ENCODE measurements at regions of chr10 and their contacts with region 1.

Region 1: DNA sequence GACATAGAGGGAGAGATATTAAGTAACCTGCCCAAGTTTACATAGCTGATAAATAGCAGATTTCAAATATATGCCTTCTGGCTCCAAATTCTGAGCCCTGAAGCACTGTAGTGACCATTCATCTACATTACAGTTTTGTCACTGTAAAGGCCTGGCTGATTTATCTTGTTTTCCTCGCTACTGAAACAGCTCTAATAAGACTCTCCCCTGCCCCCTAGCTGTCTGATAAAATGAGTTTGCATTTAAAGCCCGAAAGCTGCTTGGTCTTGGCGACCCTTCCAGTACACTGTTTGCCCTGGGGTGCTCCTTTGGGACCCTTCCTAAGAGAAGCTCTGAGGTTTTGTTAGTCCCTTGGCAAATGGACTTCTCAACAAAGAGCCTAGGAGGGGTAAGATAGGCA is 59.7 kb upstream of the RAB11FIP2 start:
- DNase-seq: peak in 2 of 4 donors; percentile 23 to 48
- ATAC-seq: no peak
- H3K4me3 ChIP-seq: no peak overlapping the region
- H3K27ac ChIP-seq: no peak overlapping the region
- H3K4me1 ChIP-seq: no peaks in the 10 kb centered on the region
- H3K27me3 ChIP-seq: no peaks in the 10 kb centered on the region
- CTCF ChIP-seq: peak; percentile 10 to 57 (median 45)
- POLR2A ChIP-seq: no peak

Region 2: DNA sequence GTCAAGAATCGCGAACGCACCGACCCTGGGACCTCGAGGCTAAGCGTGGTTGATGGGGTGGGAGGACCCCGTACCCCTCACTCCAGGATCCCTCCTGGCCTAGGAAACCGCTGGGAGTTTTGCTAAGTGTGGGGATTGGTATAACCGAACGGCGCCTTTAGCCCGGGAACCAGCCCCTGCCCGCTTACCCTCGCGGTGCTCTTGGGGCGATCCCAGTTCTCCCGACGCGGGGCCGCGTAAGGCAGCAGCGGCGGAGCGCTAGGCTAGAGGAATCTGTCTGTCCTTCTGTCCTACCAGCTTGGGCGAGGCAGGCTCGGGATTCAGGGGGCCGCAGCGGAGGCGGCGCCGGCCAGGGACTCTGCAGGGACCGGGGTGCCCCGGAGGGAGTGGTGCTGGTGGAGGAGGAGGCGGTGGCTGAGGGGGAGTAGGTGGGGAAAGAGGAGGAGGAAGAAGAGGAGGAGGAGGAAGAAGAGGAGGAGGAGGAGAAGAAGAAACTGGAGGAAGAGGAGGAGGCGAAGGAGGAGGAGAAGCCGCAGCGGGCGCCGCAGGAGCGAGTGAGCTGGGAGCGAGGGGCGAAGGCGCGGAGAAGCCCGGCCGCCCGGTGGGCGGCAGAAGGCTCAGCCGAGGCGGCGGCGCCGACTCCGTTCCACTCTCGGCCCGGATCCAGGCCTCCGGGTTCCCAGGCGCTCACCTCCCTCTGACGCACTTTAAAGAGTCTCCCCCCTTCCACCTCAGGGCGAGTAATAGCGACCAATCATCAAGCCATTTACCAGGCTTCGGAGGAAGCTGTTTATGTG is 564.3 kb before region 1 on chr10:
- intact Hi-C with region 1: loop called (anchors 10 kb)
- DNase-seq: peak in 1 of 4 donors; percentile 26
- ATAC-seq: no peak
- H3K4me3 ChIP-seq: no peak overlapping the region
- H3K27ac ChIP-seq: no peak overlapping the region
- H3K4me1 ChIP-seq: peaks cover 63% of the 10 kb centered on the region
- H3K27me3 ChIP-seq: peaks cover 7 to 64% of the 10 kb centered on the region in 2 donors
- CTCF ChIP-seq: no peak
- POLR2A ChIP-seq: no peak

Region 3: GRCh38 chr10:117926491-117926890 is 179.9 kb before region 1 on chr10:
- intact Hi-C with region 1: no loop called
- DNase-seq: no peak
- ATAC-seq: no peak
- H3K4me3 ChIP-seq: no peak overlapping the region
- H3K27ac ChIP-seq: no peak overlapping the region
- H3K4me1 ChIP-seq: no peaks in the 10 kb centered on the region
- H3K27me3 ChIP-seq: no peaks in the 10 kb centered on the region
- CTCF ChIP-seq: no peak
- POLR2A ChIP-seq: no peak

Measured in body of pancreas (tissue), 4 donors.